Activated naive CD4-positive, alpha-beta T cell treated with anti-CD3 and anti-CD28 coated beads for 36 hours (primary cell): ENCODE measurements at regions of chr7 and their contacts with region 1.

Region 1: GRCh38 chr7:16982640-16983350 is 101.0 kb upstream of the AGR3 start:
- DNase-seq: peak; percentile 30
- H3K4me3 Mint-ChIP-seq: no peak overlapping the region
- H3K27ac Mint-ChIP-seq: no peak overlapping the region
- H3K4me1 Mint-ChIP-seq: peaks cover 2% of the 10 kb centered on the region
- H3K27me3 Mint-ChIP-seq: peaks cover 7% of the 10 kb centered on the region

Region 2: DNA sequence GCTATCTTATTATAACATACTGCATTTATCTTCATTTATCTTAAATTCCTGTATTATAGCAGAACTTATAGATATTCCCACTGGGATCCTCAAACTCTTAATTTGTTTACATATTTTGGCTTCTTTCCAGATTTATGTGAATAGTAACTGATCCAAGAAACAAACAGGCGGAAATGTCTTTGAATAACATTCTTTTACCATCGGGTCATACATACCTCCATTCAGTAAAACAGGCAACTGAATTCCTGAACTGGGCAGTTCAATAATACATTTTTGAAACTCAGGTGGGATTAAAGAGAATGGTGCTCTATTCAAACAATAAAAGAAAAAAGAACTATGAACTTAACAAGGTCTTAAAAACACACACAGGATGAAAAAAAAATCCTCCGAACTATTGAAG is 898.9 kb before region 1 on chr7:
- CTCF ChIA-PET with region 1: no interaction called
- intact Hi-C with region 1: no loop called
- DNase-seq: no peak
- H3K4me3 Mint-ChIP-seq: no peak overlapping the region
- H3K27ac Mint-ChIP-seq: no peak overlapping the region
- H3K4me1 Mint-ChIP-seq: no peaks in the 10 kb centered on the region
- H3K27me3 Mint-ChIP-seq: no peaks in the 10 kb centered on the region

Region 3: DNA sequence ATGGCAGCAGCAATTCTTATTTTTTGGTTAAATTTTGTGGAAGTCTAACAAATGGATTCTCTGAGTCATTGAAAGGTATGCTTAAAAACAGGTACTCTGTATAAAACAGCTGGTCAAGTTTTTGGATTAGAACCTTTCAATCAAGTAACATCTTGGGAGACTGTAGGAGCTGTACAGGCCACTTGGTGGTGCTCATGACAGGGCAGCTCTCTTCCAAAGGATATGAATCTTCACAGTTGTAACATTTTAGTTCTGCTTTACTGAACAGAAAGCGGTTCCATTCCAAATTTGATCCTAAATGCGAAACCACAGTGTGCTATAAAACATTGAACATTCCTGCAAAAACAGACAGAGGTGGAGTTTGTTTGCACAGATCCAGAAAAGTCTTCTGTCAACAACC is 56.5 kb before region 1 on chr7:
- CTCF ChIA-PET with region 1: interaction called, 4 read pairs
- intact Hi-C with region 1: loop called (anchors 5 kb)
- DNase-seq: peak; percentile 33
- H3K4me3 Mint-ChIP-seq: no peak overlapping the region
- H3K27ac Mint-ChIP-seq: no peak overlapping the region
- H3K4me1 Mint-ChIP-seq: peaks cover 27% of the 10 kb centered on the region
- H3K27me3 Mint-ChIP-seq: peaks cover 2% of the 10 kb centered on the region

Region 4: DNA sequence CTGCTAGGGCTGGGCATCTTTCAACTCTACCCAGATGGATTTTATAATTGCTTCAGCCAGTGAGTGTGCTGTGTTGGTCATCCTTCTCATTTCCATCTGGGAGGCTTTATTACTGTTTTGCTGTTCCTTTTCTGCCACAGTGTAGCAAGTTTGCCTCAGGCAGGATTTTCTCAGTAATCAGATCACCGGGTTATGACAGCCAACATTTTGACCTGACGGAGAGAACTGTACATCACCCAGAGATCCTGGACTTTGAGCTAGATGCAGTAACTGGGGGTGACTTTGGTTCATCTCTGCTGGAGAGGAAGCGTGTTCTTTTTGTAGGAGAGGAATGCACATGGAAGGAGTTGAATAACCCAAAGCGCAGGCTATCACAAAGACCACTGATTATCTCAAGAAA is 10.7 kb after region 1 on chr7:
- CTCF ChIA-PET with region 1: interaction called, 15 read pairs
- intact Hi-C with region 1: no loop called
- DNase-seq: no peak
- H3K4me3 Mint-ChIP-seq: no peak overlapping the region
- H3K27ac Mint-ChIP-seq: no peak overlapping the region
- H3K4me1 Mint-ChIP-seq: no peaks in the 10 kb centered on the region
- H3K27me3 Mint-ChIP-seq: peaks cover 2% of the 10 kb centered on the region

Region 5: GRCh38 chr7:17063045-17063383 is 80.2 kb after region 1 on chr7:
- CTCF ChIA-PET with region 1: interaction called, 5 read pairs
- intact Hi-C with region 1: loop called (anchors 2 kb)
- DNase-seq: no peak
- H3K4me3 Mint-ChIP-seq: no peak overlapping the region
- H3K27ac Mint-ChIP-seq: no peak overlapping the region
- H3K4me1 Mint-ChIP-seq: peaks cover 2% of the 10 kb centered on the region
- H3K27me3 Mint-ChIP-seq: no peaks in the 10 kb centered on the region

Region 6: DNA sequence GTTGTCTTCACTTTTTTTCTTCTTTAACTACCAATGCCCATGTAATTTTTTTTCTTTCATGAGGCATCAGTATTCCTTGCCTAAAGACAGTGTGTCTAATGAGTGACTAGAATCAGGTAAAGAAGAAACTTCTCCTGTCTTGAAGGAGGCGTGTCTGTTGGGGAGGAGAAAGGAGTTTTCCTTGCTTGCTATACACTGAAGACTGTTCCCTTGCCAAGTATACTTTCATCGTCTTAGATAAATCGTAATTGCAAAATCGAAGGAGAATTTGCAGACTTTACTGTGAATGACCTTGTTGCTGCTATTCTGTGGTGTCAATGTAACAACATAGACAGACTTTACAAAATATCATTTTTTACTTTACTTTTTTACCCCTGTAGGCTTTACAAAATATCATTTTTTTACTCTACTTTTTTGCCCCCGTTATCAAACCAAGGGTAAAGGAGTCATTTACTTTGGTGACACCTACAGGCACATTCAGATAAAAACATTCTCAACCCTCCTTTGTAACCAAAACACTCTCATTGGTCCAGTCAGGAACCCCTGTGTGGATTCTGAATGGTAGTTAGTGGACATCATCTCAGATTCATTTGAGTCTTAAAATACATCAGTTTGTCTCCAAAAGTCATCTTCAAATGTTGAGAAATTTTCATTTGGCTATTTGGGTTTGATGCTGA is 548.1 kb after region 1 on chr7:
- CTCF ChIA-PET with region 1: interaction called, 8 read pairs
- intact Hi-C with region 1: loop called (anchors 1 kb)
- DNase-seq: no peak
- H3K4me3 Mint-ChIP-seq: no peak overlapping the region
- H3K27ac Mint-ChIP-seq: no peak overlapping the region
- H3K4me1 Mint-ChIP-seq: no peaks in the 10 kb centered on the region
- H3K27me3 Mint-ChIP-seq: peaks cover 10% of the 10 kb centered on the region

Region 7: DNA sequence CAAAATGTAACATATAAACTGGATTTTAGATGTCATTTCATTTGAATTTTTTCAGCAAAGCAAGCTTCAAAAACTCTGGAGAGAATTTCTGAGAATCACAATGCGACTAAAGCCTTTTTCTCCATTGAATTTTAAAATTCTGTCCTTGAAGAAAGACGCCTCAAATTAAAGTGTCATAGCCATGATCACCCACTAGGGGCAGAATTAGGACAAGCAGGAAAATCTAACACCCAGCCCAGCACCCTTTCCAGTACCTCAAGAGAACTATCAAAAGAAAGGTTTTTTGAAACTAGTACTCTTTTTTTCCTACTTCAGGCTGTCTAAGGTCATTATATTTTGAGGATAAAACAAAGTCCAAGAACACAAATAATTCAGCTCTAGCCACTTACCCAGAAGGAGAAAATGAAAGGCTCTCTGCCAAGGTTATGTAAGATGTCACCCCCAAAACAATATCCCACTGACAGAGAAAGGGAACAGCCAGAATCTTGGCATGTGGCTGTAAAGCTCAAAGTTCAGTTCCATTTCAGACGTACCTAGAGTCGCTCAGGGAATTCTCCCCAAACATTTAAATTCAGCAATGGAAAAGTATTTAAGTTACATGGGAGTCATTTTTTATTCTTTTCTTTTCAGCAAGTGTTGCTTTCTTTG is 658.1 kb after region 1 on chr7:
- CTCF ChIA-PET with region 1: interaction called, 3 read pairs
- intact Hi-C with region 1: loop called (anchors 2 kb)
- DNase-seq: peak; percentile 22
- H3K4me3 Mint-ChIP-seq: no peak overlapping the region
- H3K27ac Mint-ChIP-seq: no peak overlapping the region
- H3K4me1 Mint-ChIP-seq: no peaks in the 10 kb centered on the region
- H3K27me3 Mint-ChIP-seq: peaks cover 14% of the 10 kb centered on the region

Region 8: DNA sequence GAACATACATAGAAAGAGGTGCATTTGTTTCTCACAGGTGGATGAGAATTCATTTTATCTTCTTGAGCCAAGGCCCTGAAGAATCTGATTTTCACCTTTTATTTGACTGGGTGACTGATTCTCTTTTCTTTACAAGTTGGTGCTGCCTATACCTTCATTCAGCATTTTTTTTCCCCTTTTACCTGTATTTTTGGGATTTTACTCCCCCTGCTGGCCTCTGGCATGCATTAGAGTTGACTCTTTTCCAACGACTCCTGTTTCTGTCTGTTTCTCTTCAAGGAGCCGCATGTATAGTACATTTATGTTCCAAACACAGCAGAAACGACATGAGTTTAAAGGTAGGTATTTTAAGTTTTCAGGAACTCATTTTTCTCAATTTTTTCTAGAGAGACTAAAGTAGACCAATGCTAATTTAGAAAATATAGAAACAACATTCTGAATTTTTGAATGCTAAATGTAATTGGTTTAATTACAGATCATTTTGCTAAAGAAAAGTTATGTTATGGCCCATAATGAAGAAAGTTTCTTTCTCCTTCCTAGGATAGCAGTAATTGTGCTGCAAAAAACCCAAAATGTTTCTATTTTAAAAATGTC is 1362.9 kb after region 1 on chr7:
- CTCF ChIA-PET with region 1: no interaction called
- intact Hi-C with region 1: loop called (anchors 10 kb)
- DNase-seq: peak; percentile 44
- H3K4me3 Mint-ChIP-seq: no peak overlapping the region
- H3K27ac Mint-ChIP-seq: no peak overlapping the region
- H3K4me1 Mint-ChIP-seq: no peaks in the 10 kb centered on the region
- H3K27me3 Mint-ChIP-seq: peaks cover 11% of the 10 kb centered on the region